Heart right ventricle (tissue), 16 donors: ENCODE measurements at regions of chr2 and their contacts with region 1.

Region 1: DNA sequence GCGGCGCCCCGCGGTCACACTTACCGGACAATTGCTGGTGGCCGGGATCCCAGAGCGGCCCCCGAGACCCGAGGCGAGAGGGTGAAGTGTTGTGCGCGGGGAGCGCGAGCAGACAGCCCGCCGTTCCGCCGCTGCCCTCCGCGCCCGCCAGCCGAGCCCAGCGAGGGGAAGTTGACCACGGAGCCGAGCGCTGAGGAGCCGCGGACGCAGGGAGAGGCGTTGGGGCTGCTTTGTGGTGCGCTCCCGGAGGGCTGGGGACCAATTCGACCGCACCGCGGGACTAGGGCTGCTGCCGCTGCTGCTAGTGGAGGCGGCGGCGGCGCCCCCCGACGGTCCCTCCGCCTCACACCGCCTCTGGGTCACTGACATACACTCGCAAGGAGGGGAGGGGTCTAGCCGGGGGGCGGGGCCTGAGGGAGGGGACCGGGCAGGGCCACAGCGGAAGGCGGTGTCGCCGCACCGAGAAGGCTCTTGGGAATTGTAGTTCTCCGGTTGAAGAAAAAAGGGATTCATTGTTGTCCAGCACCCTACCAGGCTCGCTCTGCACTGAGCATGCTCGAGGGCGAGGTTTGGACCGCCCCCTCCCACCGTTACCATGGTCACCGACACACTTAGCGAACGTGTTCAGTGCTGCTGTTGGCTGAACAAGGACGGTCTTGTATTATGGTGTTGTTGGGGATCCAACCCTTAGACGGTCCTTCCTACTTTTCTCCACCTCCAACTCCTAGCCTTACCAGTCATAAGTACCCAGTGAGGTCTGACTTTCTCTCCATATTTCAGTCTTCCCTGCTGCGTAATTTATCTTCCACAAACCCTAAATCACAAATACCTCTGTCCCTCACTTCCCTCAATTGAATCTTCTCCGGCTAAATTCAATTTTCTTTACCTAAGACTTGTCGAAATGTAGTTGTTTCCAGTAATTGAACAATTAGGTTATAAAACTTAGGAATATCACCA is at the start of gene PELI1:
- DNase-seq: peak; percentile 94 to 96
- ATAC-seq: peak; percentile 98 to 100 (median 99)
- H3K4me3 ChIP-seq: peak within 1 kb of the TSS; percentile 78 to 99 (median 95)
- H3K27ac ChIP-seq: peak within 1 kb of the TSS; percentile 96 to 99 (median 98)
- H3K4me1 ChIP-seq: peaks cover 0 to 39% (median 18%) of the 10 kb centered on the region in 9 donors
- H3K27me3 ChIP-seq: no peaks in the 10 kb centered on the region
- CTCF ChIP-seq: peak in 7 of 9 donors; percentile 9 to 56 (median 42)
- total RNA-seq, gene PELI1: 6.3 to 15.6 (median 8.6) TPM

Region 2: DNA sequence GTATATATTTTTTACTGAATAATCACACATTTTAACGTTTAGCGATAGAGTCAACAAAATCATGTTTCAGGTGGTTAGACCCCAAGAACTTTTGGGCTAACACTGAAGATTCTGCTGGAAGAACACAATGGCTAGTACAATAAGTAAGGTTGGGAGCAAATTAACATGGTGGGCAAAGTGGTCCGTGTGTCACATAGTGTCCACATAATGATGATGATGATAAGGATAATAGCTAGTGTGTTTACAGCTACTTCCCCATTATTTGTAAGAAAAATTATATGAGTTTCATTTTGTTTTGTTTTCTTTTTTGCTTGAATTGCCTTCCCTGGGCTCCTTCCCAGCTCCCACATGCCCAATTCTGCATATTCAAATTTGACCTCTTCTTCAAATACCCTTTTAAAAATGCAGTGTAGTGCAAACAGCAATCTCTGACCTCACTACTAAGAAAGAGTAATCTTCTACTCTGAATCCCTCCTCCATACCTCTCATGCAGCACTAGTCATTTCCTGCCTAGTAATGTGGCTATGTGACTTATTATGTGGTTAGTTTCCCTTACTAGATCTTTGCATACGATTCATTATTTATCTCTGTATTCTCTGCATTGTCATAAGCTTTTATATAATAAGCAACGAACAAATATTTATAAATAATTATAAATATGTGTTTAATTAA is 108.2 kb before region 1 on chr2:
- intact Hi-C with region 1: loop called in 1 of 10 experiments (anchors 10 kb)
- DNase-seq: no peak
- ATAC-seq: no peak
- H3K4me3 ChIP-seq: no peak overlapping the region
- H3K27ac ChIP-seq: peak overlapping the region in 1 of 10 donors; percentile 10
- H3K4me1 ChIP-seq: peaks cover 0 to 17% (median 0%) of the 10 kb centered on the region in 9 donors
- H3K27me3 ChIP-seq: no peaks in the 10 kb centered on the region
- CTCF ChIP-seq: no peak

Region 3: GRCh38 chr2:64062829-64063228 is 81.5 kb before region 1 on chr2:
- intact Hi-C with region 1: loop called in 3 of 10 experiments (anchors 2 to 5 kb)
- DNase-seq: no peak
- ATAC-seq: no peak
- H3K4me3 ChIP-seq: no peak overlapping the region
- H3K27ac ChIP-seq: peak overlapping the region in 1 of 10 donors; percentile 78
- H3K4me1 ChIP-seq: peaks cover 0 to 20% (median 13%) of the 10 kb centered on the region in 9 donors
- H3K27me3 ChIP-seq: peaks cover 0 to 6% (median 0%) of the 10 kb centered on the region in 7 donors
- CTCF ChIP-seq: no peak

Region 4: DNA sequence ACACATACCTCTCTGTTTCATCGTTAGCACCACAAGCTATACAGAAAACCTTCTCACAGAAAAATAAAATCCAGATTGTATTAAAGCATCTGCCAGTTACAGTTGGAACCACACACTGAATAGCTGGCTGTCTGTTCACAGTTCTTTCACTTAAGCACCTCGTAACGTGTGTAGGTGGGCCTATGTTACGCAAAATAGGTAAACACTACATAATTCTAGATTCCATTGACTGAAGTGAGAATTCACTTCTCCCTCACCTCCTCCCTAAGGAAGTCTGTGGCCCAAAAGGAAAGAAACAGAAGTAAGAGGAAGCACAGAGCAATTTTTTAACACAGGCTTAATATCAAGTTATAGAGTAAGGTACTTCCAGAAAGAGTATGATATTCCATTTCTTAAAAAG is 25.0 kb before region 1 on chr2:
- intact Hi-C with region 1: no loop called
- DNase-seq: no peak
- ATAC-seq: no peak
- H3K4me3 ChIP-seq: no peak overlapping the region
- H3K27ac ChIP-seq: no peak overlapping the region
- H3K4me1 ChIP-seq: peaks cover 0 to 79% (median 44%) of the 10 kb centered on the region in 9 donors
- H3K27me3 ChIP-seq: no peaks in the 10 kb centered on the region
- CTCF ChIP-seq: no peak

Region 5: DNA sequence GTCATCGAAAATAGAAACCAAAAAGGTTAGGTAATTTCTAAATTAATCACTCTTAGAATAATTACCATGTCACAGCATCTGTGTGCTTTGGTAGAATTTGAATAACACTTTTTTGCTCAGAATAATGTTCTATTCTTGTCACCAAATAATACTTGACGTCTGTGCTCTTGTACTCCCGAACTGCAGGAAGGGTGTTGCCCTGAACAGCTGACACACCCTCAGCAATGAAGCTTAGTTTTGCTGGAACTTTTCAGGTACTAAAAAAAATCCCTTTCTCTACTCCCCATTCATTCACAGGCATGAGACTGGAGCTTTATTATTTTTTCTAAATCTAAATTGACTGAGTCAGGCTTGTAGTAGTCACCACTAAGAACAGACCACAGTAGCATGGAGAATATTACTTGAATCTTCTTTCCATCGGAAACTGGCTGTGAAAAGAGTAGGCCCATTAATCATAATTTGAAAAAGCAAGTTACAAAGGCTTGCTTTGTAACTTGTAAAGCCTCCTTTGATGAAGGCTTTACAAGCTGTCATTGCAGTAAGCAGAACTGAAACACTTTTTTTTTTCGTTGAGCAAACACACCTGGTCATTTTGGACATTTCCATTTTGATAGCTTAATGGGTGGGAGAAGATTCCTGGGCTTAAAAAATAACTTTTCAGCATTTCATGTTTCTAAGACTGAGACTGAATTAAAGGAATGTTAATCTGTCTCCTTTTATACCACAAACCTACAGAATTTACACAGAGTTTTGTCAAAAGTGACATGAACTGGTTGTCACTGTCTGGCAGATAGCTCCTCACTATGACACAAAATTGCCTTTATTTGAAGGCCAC is 70.2 kb after region 1 on chr2:
- intact Hi-C with region 1: loop called in 2 of 10 experiments (anchors 5 kb)
- DNase-seq: peak in 1 of 2 donors; percentile 41
- ATAC-seq: peak; percentile 75 to 95 (median 89)
- H3K4me3 ChIP-seq: no peak overlapping the region
- H3K27ac ChIP-seq: peak overlapping the region; percentile 33 to 87 (median 80)
- H3K4me1 ChIP-seq: peaks cover 5 to 58% (median 20%) of the 10 kb centered on the region in 9 donors
- H3K27me3 ChIP-seq: no peaks in the 10 kb centered on the region
- CTCF ChIP-seq: no peak

Region 6: GRCh38 chr2:64228126-64228678 is 83.9 kb after region 1 on chr2:
- intact Hi-C with region 1: loop called in 2 of 10 experiments (anchors 5 kb)
- DNase-seq: peak; percentile 86 to 87
- ATAC-seq: peak; percentile 96 to 99 (median 98)
- H3K4me3 ChIP-seq: peak overlapping the region in 9 of 10 donors; percentile 30 to 59 (median 56)
- H3K27ac ChIP-seq: peak overlapping the region; percentile 41 to 93 (median 78)
- H3K4me1 ChIP-seq: peaks cover 3 to 35% (median 16%) of the 10 kb centered on the region in 9 donors
- H3K27me3 ChIP-seq: no peaks in the 10 kb centered on the region
- CTCF ChIP-seq: peak in 2 of 9 donors; percentile 4 to 18

Region 7: DNA sequence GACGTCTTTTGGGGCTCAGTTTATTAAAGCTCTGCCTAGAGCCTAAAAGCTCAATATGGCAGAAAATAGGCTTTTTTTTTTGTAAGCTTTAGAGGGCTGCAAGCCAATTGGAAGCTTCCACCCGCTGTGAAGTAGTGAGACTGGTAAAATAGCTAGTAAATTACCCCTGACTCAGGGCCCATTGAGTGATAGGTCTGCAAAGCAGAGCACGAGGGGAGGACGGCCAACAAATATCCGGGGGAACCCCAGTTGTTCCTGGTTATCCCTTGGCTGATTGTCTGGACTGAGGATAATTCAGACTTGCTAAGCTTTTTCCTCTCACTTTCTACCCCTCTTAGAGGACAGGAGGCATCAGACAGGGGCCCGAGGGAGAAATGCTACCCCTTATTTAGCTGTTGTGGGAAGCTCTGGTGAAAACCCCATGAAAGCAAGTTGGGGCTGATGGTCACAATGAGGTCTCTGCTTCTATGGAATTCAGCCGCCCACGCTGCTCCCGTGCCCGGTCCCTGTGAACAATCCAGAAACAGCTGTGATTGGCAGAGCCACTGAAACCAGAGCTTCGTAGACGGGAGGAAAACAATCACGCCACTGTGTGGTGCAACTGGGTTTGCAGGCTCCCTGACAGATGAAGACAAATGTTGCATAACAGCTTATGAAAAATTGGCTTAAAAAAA is 167.8 kb after region 1 on chr2:
- intact Hi-C with region 1: loop called in 3 of 10 experiments (anchors 5 to 10 kb)
- DNase-seq: peak; percentile 61 to 81
- ATAC-seq: peak; percentile 88 to 95 (median 93)
- H3K4me3 ChIP-seq: peak overlapping the region in 3 of 10 donors; percentile 3 to 22 (median 8)
- H3K27ac ChIP-seq: peak overlapping the region in 7 of 10 donors; percentile 7 to 71 (median 53)
- H3K4me1 ChIP-seq: peaks cover 0 to 27% (median 18%) of the 10 kb centered on the region in 9 donors
- H3K27me3 ChIP-seq: no peaks in the 10 kb centered on the region
- CTCF ChIP-seq: peak; percentile 18 to 77 (median 58)

Region 8: DNA sequence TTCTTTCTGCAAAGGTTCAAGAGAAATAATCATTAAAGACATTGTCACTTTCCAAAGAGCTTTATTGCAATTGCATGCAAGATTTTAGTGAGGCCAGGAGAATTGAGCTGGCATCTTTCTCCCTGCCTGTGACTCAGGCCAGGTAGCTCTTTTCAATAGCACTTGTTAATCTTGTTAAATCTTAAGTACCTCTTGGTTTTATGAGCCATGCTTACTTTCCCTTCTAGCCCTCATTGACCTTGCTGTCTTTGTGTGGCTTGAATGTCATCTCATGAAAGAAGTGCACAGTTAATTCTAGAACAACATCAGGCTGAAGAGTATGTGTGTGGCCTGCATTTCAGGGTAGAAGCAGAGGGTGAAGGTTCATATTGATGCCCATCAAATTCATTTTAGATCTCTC is 294.9 kb after region 1 on chr2:
- intact Hi-C with region 1: no loop called
- DNase-seq: no peak
- ATAC-seq: no peak
- H3K4me3 ChIP-seq: no peak overlapping the region
- H3K27ac ChIP-seq: no peak overlapping the region
- H3K4me1 ChIP-seq: no peaks in the 10 kb centered on the region
- H3K27me3 ChIP-seq: no peaks in the 10 kb centered on the region
- CTCF ChIP-seq: no peak